Activated CD4-positive, alpha-beta T cell treated with anti-CD3 and anti-CD28 coated beads for 36 hours (primary cell): ENCODE measurements at regions of chr2 and their contacts with region 1.

Region 1: DNA sequence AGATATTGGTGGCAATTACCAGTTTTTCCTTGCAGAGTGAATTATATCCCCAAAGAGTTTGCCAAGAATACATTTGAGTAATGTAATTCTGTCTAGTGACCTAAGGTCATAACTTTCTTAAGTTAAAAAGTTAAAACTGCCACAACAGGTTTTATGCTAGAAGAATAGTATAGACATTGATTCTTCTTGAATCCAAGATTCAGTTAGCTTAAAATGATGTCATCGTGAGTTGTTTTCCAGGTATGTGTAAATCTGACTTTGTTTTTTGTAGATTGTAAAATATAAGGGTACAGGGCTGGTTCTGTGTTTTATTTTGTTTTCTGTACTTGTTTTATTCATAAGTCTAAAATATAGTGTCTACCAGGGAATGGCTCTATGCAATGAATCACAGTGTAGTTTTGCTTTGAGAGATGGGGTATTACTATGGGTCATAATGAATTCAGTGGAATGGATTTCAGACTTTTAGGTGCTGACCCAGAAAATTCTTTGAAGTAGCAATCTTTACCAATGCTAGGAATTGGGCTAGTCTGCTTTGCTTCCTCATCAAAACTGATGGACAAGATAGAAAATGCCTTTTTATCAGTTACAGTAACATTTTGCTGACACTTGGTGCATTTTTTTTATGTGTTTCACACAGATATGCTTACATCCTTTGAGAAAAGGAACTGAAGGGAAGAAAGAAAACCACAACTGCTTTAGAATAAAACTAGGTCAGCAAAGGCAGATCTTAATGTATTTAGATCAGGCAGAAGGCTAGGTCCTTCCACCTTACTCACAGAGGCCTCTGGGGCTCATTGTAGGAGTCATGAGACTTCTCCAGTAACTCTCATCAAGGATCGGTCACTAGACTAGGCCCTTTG is 20.8 kb upstream of the MGAT5 start:
- DNase-seq: peak; percentile 47
- ATAC-seq: peak; percentile 82
- H3K4me3 Mint-ChIP-seq: peak overlapping the region; percentile 36
- H3K27ac Mint-ChIP-seq: peak overlapping the region; percentile 76
- H3K4me1 Mint-ChIP-seq: peaks cover 81% of the 10 kb centered on the region
- H3K27me3 Mint-ChIP-seq: no peaks in the 10 kb centered on the region

Region 2: GRCh38 chr2:133908171-133908570 is 324.9 kb before region 1 on chr2:
- CTCF ChIA-PET with region 1: no interaction called
- POLR2A ChIA-PET with region 1: no interaction called
- intact Hi-C with region 1: no loop called
- DNase-seq: no peak
- ATAC-seq: no peak
- H3K4me3 Mint-ChIP-seq: no peak overlapping the region
- H3K27ac Mint-ChIP-seq: no peak overlapping the region
- H3K4me1 Mint-ChIP-seq: no peaks in the 10 kb centered on the region
- H3K27me3 Mint-ChIP-seq: peaks cover 14% of the 10 kb centered on the region

Region 3: DNA sequence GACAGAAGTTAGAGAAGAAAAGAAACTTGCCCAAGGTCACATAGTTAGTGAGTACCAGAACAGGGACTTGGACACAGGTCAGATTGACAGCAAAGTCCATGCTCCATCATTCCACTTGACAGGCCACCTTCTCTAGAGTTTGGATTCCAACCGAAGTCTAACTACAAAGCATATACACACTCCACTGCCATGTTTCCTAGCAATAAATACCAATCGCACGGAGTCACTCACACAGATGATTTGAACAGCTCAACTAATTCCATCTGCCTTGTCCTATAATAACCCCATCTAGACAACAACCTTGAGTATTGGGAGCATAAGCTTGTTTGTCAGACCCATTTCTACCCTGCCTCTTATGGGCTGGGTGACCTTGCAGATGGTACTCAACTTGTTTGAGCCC is 313.8 kb before region 1 on chr2:
- CTCF ChIA-PET with region 1: no interaction called
- POLR2A ChIA-PET with region 1: no interaction called
- intact Hi-C with region 1: no loop called
- DNase-seq: no peak
- ATAC-seq: no peak
- H3K4me3 Mint-ChIP-seq: no peak overlapping the region
- H3K27ac Mint-ChIP-seq: no peak overlapping the region
- H3K4me1 Mint-ChIP-seq: no peaks in the 10 kb centered on the region
- H3K27me3 Mint-ChIP-seq: peaks cover 13% of the 10 kb centered on the region

Region 4: GRCh38 chr2:134169788-134170187 is 63.3 kb before region 1 on chr2:
- CTCF ChIA-PET with region 1: interaction called, 5 read pairs
- POLR2A ChIA-PET with region 1: interaction called, 3 read pairs
- intact Hi-C with region 1: loop called (anchors 1 kb)
- DNase-seq: peak; percentile 51
- ATAC-seq: peak; percentile 91
- H3K4me3 Mint-ChIP-seq: no peak overlapping the region
- H3K27ac Mint-ChIP-seq: peak overlapping the region; percentile 13
- H3K4me1 Mint-ChIP-seq: peaks cover 85% of the 10 kb centered on the region
- H3K27me3 Mint-ChIP-seq: no peaks in the 10 kb centered on the region

Region 5: GRCh38 chr2:134245340-134245984 is 12.4 kb after region 1 on chr2:
- CTCF ChIA-PET with region 1: interaction called, 36 read pairs
- POLR2A ChIA-PET with region 1: no interaction called
- intact Hi-C with region 1: loop called in 1 of 2 experiments (anchors 1 kb)
- DNase-seq: peak; percentile 87
- ATAC-seq: peak; percentile 37
- H3K4me3 Mint-ChIP-seq: no peak overlapping the region
- H3K27ac Mint-ChIP-seq: no peak overlapping the region
- H3K4me1 Mint-ChIP-seq: peaks cover 82% of the 10 kb centered on the region
- H3K27me3 Mint-ChIP-seq: no peaks in the 10 kb centered on the region

Region 6: DNA sequence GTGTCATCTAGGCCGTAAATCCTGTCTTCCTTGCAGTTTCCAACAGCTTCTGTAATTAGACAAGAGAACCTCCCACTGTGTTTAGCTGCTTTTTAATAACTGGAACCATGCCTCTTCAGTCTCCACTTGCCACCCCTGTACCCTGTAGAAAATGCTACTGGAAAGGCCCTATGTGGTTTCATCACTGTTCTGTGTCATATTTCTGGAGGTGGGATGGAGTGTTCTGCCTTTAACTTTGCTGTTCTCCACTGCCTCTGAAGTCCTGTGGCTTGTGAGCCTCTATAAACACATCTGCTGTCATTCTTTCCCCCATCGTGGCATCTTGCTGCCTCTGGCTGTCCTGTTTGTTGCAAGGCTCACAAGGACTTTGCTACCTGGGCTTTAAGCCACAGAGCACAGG is 38.7 kb after region 1 on chr2:
- CTCF ChIA-PET with region 1: no interaction called
- POLR2A ChIA-PET with region 1: no interaction called
- intact Hi-C with region 1: no loop called
- DNase-seq: peak; percentile 37
- ATAC-seq: peak; percentile 96
- H3K4me3 Mint-ChIP-seq: no peak overlapping the region
- H3K27ac Mint-ChIP-seq: no peak overlapping the region
- H3K4me1 Mint-ChIP-seq: peaks cover 56% of the 10 kb centered on the region
- H3K27me3 Mint-ChIP-seq: no peaks in the 10 kb centered on the region

Region 7: DNA sequence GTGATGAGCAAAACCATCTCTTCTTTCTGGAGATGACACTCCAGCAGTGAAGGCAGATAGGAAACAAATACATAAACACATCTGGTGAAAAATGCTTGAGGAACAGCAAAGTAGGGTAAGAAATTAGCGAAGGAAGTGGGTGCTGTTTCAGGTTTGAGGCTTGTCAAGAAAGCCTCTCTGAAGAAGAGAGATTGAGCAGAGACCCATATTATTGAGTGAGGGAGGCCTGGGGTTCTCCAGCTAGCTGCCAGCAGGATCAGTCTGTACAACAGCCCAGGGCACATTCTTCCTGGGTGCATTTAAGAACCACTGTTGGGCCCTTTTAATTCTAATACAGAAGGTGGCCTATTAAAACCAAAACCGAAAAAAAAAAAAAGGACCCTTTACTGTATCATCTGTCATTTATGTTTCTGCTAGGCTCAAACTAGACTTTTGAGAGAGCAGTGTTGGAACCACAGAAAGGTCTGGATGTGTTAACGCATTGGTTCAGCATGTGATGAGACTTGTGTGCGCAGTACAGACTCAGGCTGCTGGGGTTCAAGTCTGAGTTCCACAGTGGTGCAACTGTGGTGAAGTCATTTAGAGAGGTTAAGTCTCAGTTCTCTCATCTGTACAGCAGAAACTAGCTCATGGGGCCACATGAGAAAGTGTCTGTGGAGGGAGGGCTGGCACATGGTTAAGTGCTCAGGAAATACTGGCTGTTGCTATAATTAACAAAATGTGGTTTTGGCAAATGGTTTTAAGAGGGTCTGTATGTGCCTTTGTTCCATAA is 49.7 kb after region 1 on chr2:
- CTCF ChIA-PET with region 1: no interaction called
- POLR2A ChIA-PET with region 1: no interaction called
- intact Hi-C with region 1: loop called (anchors 2 kb)
- DNase-seq: peak; percentile 70
- ATAC-seq: peak; percentile 91
- H3K4me3 Mint-ChIP-seq: no peak overlapping the region
- H3K27ac Mint-ChIP-seq: peak overlapping the region; percentile 66
- H3K4me1 Mint-ChIP-seq: peaks cover 51% of the 10 kb centered on the region
- H3K27me3 Mint-ChIP-seq: no peaks in the 10 kb centered on the region

Region 8: DNA sequence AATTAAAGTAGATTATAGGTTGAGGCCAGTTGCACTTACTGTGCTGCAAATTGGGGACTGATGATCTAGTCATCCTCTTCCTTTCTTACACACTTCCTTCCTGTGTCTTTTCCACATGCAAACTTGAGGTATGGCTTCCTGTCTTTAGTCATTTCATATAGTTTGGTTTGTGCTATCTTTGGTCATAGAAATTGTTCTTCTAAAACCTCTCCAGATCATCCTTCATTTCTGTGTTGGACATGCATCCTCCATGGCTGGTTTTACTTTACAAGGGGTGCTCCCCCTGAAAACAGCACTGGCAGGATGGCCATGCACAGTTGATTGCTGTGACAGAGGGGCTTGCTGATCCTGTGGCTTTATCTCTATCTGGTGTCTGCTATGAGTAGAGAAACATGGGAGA is 57.3 kb after region 1 on chr2:
- CTCF ChIA-PET with region 1: no interaction called
- POLR2A ChIA-PET with region 1: no interaction called
- intact Hi-C with region 1: loop called in 1 of 2 experiments (anchors 2 kb)
- DNase-seq: peak; percentile 22
- ATAC-seq: peak; percentile 66
- H3K4me3 Mint-ChIP-seq: no peak overlapping the region
- H3K27ac Mint-ChIP-seq: no peak overlapping the region
- H3K4me1 Mint-ChIP-seq: peaks cover 7% of the 10 kb centered on the region
- H3K27me3 Mint-ChIP-seq: no peaks in the 10 kb centered on the region

Region 9: GRCh38 chr2:134411828-134412638 is 178.9 kb after region 1 on chr2:
- CTCF ChIA-PET with region 1: interaction called, 4 read pairs
- POLR2A ChIA-PET with region 1: no interaction called
- intact Hi-C with region 1: loop called in 1 of 2 experiments (anchors 5 kb)
- DNase-seq: peak; percentile 82
- ATAC-seq: peak; percentile 98
- H3K4me3 Mint-ChIP-seq: no peak overlapping the region
- H3K27ac Mint-ChIP-seq: no peak overlapping the region
- H3K4me1 Mint-ChIP-seq: peaks cover 41% of the 10 kb centered on the region
- H3K27me3 Mint-ChIP-seq: no peaks in the 10 kb centered on the region